Calu3 (cell line): ENCODE measurements at regions of chr18 and their contacts with region 1.

Region 1: GRCh38 chr18:62186774-62187542 is at the starts of genes PIGN and RELCH:
- DNase-seq: peak; percentile 96
- H3K4me3 Mint-ChIP-seq: peak within 1 kb of the TSS; percentile 99
- H3K27ac Mint-ChIP-seq: peak within 1 kb of the TSS; percentile 97
- H3K4me1 Mint-ChIP-seq: peaks cover 33% of the 10 kb centered on the region
- H3K27me3 Mint-ChIP-seq: no peaks in the 10 kb centered on the region
- CTCF ChIP-seq: no peak
- total RNA-seq, gene PIGN: 52.5 and 57.3 TPM in 2 replicates
- total RNA-seq, gene RELCH: 54.5 and 63.9 TPM in 2 replicates

Region 2: DNA sequence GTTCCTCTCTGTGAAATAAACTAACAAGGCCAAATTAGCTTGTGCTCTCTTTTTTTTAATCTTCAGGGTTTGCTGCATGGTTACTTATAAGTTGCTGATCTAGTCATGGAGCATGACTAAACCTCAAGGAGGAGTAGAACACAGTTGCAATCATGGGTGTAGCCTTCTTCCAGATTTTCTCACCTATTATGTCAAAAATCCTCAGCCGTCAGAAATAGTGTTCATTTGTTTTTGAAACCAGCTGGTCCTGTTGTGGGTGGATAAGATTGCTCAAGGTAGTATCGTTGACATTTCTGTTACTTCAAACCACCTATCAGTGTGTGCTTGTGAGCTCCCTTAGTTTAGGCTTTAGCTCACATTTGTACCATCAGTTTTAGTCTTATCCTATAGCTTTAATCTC is 11.3 kb after region 1 on chr18:
- CTCF ChIA-PET with region 1: interaction called, 14 read pairs
- intact Hi-C with region 1: no loop called
- DNase-seq: no peak
- H3K4me3 Mint-ChIP-seq: no peak overlapping the region
- H3K27ac Mint-ChIP-seq: peak overlapping the region; percentile 44
- H3K4me1 Mint-ChIP-seq: peaks cover 64% of the 10 kb centered on the region
- H3K27me3 Mint-ChIP-seq: no peaks in the 10 kb centered on the region
- CTCF ChIP-seq: no peak

Region 3: GRCh38 chr18:62249478-62250097 is 62.6 kb after region 1 on chr18:
- CTCF ChIA-PET with region 1: interaction called, 14 read pairs
- intact Hi-C with region 1: loop called (anchors 1 kb)
- DNase-seq: peak; percentile 72
- H3K4me3 Mint-ChIP-seq: no peak overlapping the region
- H3K27ac Mint-ChIP-seq: no peak overlapping the region
- H3K4me1 Mint-ChIP-seq: peaks cover 8% of the 10 kb centered on the region
- H3K27me3 Mint-ChIP-seq: no peaks in the 10 kb centered on the region
- CTCF ChIP-seq: peak; percentile 64